Left cardiac atrium (tissue), 4 donors: ENCODE measurements at regions of chr3 and their contacts with region 1.

Region 1: GRCh38 chr3:45760878-45761711 is 35.2 kb downstream of the SLC6A20 start:
- DNase-seq: no peak
- ATAC-seq: peak; percentile 84 to 89

Region 2: GRCh38 chr3:45832691-45833090 is 71.6 kb after region 1 on chr3:
- intact Hi-C with region 1: loop called in 1 of 2 experiments (anchors 5 kb)
- DNase-seq: no peak
- ATAC-seq: no peak

Region 3: DNA sequence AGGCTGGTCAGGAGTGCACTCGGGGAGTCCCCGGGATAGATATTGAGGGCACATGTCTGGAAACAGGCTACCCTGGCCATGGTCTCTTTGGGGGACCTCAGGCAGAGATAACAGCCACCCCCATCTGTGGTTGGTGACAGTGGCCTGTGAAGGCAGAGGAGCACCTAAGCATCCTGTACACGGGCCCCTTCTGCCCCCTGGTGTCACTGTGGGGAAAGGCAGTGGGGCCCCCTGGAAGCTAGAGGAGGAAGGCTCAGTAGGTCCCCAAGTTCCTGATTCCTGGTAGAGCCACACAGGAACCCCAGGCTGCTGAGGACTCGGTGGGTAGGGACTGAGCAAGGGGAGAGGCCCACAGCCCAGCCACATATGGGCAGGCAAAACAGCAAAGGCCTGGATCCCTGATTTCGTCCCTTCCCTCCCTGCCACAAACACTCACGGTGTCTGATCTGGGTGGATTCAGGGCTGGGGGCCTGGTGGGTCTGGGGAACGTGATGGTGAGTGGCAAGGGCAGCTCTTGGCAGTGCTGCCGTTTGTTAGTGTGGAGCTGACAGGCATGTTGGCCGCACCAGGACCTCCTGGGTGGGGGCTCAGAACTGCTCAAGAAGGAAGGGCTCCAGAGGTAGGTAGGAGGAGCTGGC is 168.1 kb after region 1 on chr3:
- intact Hi-C with region 1: loop called in 1 of 2 experiments (anchors 10 kb)
- DNase-seq: peak; percentile 31
- ATAC-seq: peak; percentile 58 to 59

Region 4: DNA sequence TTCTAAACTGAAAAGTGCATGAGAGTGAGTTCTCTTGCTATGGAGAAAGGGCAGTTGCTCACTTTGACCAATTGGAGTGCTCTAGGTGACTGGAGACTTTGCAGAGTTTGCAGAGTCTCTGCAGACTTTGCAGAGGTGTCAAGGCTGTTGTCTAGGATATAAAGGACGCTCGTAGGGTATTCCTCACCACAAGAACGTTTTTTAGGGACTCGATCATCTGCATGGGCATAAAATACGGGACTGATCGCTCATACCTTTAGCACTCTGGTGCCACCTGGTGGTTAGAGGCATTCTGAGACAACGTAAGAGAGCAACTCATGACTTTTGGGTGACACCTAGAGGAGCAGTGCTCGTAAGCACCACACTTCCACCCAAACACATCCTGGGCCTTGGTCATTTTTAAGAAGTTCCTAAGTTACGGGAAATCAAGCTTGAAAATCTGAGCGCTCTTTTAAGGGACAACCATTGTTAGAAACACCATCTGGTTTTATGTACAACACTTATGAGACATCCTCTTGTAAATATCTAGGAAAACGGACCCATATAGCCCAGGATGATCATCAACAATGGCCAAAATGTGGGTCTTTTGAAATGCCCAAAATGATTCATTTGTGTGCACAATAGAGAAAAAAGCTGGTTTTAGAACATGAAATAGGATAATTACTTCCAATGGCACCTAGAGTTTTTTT is 317.8 kb after region 1 on chr3:
- intact Hi-C with region 1: loop called (anchors 2 to 10 kb)
- DNase-seq: peak; percentile 92
- ATAC-seq: peak; percentile 95 to 97

Region 5: GRCh38 chr3:46089237-46090011 is 328.3 kb after region 1 on chr3:
- intact Hi-C with region 1: loop called in 1 of 2 experiments (anchors 10 kb)
- DNase-seq: peak; percentile 63
- ATAC-seq: peak; percentile 89 to 94